Naive thymus-derived CD4-positive, alpha-beta T cell (primary cell): ENCODE measurements at regions of chr11 and their contacts with region 1.

Region 1: GRCh38 chr11:17354601-17354991 is 3.0 kb downstream of the NCR3LG1 start:
- DNase-seq: peak in 8 of 9 donors; percentile 27 to 55 (median 50)
- ATAC-seq: peak; percentile 43
- H3K4me3 ChIP-seq: no peak overlapping the region
- H3K4me3 Mint-ChIP-seq: peak overlapping the region in 9 of 10 donors; percentile 83 to 95 (median 90)
- H3K27ac ChIP-seq: no peak overlapping the region
- H3K27ac Mint-ChIP-seq: peak overlapping the region in 6 of 9 donors; percentile 29 to 84 (median 60)
- H3K4me1 ChIP-seq: peaks cover 10% of the 10 kb centered on the region in 2 donors
- H3K4me1 Mint-ChIP-seq: peaks cover 28 to 31% (median 29%) of the 10 kb centered on the region in 7 donors
- H3K27me3 ChIP-seq: no peaks in the 10 kb centered on the region
- H3K27me3 Mint-ChIP-seq: peaks cover 0 to 49% (median 0%) of the 10 kb centered on the region in 5 donors

Region 2: GRCh38 chr11:17207317-17208258 is 147.0 kb before region 1 on chr11 and contains the start of gene PIK3C2A:
- CTCF ChIA-PET with region 1: no interaction called
- POLR2A ChIA-PET with region 1: no interaction called
- intact Hi-C with region 1: loop called (anchors 2 kb)
- DNase-seq: peak; percentile 84 to 94 (median 91)
- ATAC-seq: peak; percentile 98
- H3K4me3 ChIP-seq: peak within 1 kb of the TSS; percentile 93
- H3K4me3 Mint-ChIP-seq: peak within 1 kb of the TSS; percentile 90 to 99 (median 98)
- H3K27ac ChIP-seq: peak within 1 kb of the TSS; percentile 93
- H3K27ac Mint-ChIP-seq: peak within 1 kb of the TSS; percentile 87 to 99 (median 97)
- H3K4me1 ChIP-seq: peaks cover 15 to 19% of the 10 kb centered on the region in 2 donors
- H3K4me1 Mint-ChIP-seq: peaks cover 34 to 57% (median 48%) of the 10 kb centered on the region in 7 donors
- H3K27me3 ChIP-seq: no peaks in the 10 kb centered on the region
- H3K27me3 Mint-ChIP-seq: no peaks in the 10 kb centered on the region
- total RNA-seq, gene PIK3C2A: 25.4 to 56.4 (median 42.0) TPM

Region 3: GRCh38 chr11:17221968-17222367 is 132.6 kb before region 1 on chr11:
- CTCF ChIA-PET with region 1: no interaction called
- POLR2A ChIA-PET with region 1: no interaction called
- intact Hi-C with region 1: no loop called
- DNase-seq: no peak
- ATAC-seq: peak; percentile 27
- H3K4me3 ChIP-seq: no peak overlapping the region
- H3K4me3 Mint-ChIP-seq: no peak overlapping the region
- H3K27ac ChIP-seq: no peak overlapping the region
- H3K27ac Mint-ChIP-seq: no peak overlapping the region
- H3K4me1 ChIP-seq: no peaks in the 10 kb centered on the region
- H3K4me1 Mint-ChIP-seq: no peaks in the 10 kb centered on the region
- H3K27me3 ChIP-seq: no peaks in the 10 kb centered on the region
- H3K27me3 Mint-ChIP-seq: peaks cover 0 to 23% (median 0%) of the 10 kb centered on the region in 5 donors

Region 4: DNA sequence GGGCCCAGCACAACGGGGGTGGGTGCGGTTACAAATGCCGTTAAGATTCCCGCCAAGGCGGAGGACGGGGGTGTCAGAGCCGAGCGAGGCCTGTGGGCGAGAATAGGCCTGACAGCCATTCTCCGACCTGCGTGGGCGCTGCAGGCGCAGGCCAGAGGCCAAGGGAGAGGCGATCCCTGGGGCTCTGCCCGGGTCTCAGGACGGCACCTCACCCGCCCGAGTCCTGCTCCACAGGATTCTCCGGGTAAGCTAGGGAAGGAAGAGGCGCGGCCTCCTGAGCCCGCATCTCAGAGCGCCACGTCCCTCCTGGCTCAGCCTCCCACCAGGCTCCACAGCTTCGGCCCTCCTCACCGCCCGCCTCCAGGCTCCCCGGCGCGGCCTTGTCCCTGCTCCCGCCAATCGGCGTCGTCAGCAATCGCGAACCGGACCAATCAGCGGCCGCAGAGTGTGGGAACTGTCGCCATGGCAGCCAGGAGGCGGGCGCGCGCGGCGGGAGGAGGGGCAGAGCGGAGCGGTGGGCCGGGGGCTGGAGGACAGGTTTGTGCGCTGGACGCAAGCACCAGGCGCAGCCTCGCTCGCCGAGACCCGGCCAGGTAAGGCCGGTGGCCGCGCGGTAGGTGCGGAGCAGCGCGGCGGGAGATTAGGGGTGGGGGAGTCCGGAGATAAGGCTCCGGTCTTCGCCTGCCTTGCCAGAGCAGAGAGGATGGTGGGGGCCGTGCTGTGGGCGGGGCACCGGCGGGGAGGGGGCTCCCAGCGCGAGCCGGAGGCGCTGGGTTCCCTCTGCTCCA is 78.2 kb before region 1 on chr11 and contains the start of gene NUCB2:
- CTCF ChIA-PET with region 1: interaction called, 4 read pairs
- POLR2A ChIA-PET with region 1: interaction called, 17 read pairs
- intact Hi-C with region 1: loop called (anchors 1 to 2 kb)
- DNase-seq: peak; percentile 92 to 98 (median 95)
- ATAC-seq: peak; percentile 96
- H3K4me3 ChIP-seq: peak within 1 kb of the TSS; percentile 78
- H3K4me3 Mint-ChIP-seq: peak within 1 kb of the TSS; percentile 83 to 99 (median 93)
- H3K27ac ChIP-seq: peak within 1 kb of the TSS; percentile 90
- H3K27ac Mint-ChIP-seq: peak within 1 kb of the TSS; percentile 88 to 93 (median 91)
- H3K4me1 ChIP-seq: peaks cover 17 to 28% of the 10 kb centered on the region in 2 donors
- H3K4me1 Mint-ChIP-seq: peaks cover 19 to 48% (median 38%) of the 10 kb centered on the region in 7 donors
- H3K27me3 ChIP-seq: no peaks in the 10 kb centered on the region
- H3K27me3 Mint-ChIP-seq: no peaks in the 10 kb centered on the region
- total RNA-seq, gene NUCB2: 72.0 to 171 (median 145) TPM

Region 5: GRCh38 chr11:17333799-17334586 is 20.6 kb before region 1 on chr11:
- CTCF ChIA-PET with region 1: interaction called, 3 read pairs
- POLR2A ChIA-PET with region 1: interaction called, 4 read pairs
- intact Hi-C with region 1: loop called in 1 of 2 experiments (anchors 2 kb)
- DNase-seq: peak in 6 of 9 donors; percentile 2 to 39 (median 29)
- ATAC-seq: peak; percentile 70
- H3K4me3 ChIP-seq: no peak overlapping the region
- H3K4me3 Mint-ChIP-seq: peak overlapping the region in 1 of 10 donors; percentile 2
- H3K27ac ChIP-seq: peak overlapping the region; percentile 26
- H3K27ac Mint-ChIP-seq: peak overlapping the region in 8 of 9 donors; percentile 14 to 83 (median 64)
- H3K4me1 ChIP-seq: peaks cover 14% of the 10 kb centered on the region in 2 donors
- H3K4me1 Mint-ChIP-seq: peaks cover 0 to 24% (median 19%) of the 10 kb centered on the region in 7 donors
- H3K27me3 ChIP-seq: no peaks in the 10 kb centered on the region
- H3K27me3 Mint-ChIP-seq: no peaks in the 10 kb centered on the region

Region 6: GRCh38 chr11:17389211-17389956 is 34.8 kb after region 1 on chr11:
- CTCF ChIA-PET with region 1: interaction called, 6 read pairs
- POLR2A ChIA-PET with region 1: no interaction called
- intact Hi-C with region 1: loop called (anchors 1 to 2 kb)
- DNase-seq: peak; percentile 57 to 87 (median 80)
- ATAC-seq: peak; percentile 96
- H3K4me3 ChIP-seq: peak overlapping the region; percentile 62
- H3K4me3 Mint-ChIP-seq: peak overlapping the region; percentile 77 to 90 (median 83)
- H3K27ac ChIP-seq: peak overlapping the region; percentile 66
- H3K27ac Mint-ChIP-seq: peak overlapping the region in 7 of 9 donors; percentile 12 to 84 (median 55)
- H3K4me1 ChIP-seq: peaks cover 0 to 4% of the 10 kb centered on the region in 2 donors
- H3K4me1 Mint-ChIP-seq: peaks cover 0 to 9% (median 5%) of the 10 kb centered on the region in 7 donors
- H3K27me3 ChIP-seq: no peaks in the 10 kb centered on the region
- H3K27me3 Mint-ChIP-seq: peaks cover 0 to 16% (median 0%) of the 10 kb centered on the region in 5 donors

Region 7: DNA sequence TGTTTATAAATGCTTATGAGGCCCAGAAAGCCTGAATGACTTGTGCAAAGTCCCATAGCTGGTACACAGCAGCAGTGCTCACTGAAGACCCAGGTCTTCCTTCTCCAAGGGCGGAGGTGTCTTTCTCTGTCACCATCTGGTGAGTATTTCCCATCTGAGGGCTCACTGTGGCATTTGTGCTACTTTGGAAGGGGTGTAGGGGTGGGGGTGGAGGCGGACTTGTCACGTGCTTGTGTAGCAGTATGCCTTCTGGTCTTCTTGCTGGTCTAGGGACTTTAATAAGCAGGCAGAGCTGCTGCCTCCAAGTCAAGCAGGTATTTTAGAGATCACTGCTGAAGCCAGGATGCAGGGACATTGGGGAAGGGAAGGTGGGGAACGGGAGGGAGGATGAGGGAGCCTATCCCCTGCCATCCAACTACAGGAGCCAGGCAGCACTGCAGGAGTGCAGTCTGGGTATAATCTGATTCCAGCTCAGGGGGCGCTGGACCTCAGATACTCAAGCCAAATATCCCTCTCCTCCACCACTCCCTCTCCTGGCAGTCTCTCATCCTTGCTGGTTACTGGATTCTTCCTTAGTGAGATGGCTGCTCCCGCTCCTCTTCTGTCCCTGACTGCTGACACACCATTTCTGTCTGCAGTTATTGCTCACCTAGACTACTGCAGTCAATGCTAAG is 118.6 kb after region 1 on chr11:
- CTCF ChIA-PET with region 1: no interaction called
- POLR2A ChIA-PET with region 1: no interaction called
- intact Hi-C with region 1: no loop called
- DNase-seq: no peak
- ATAC-seq: no peak
- H3K4me3 ChIP-seq: no peak overlapping the region
- H3K4me3 Mint-ChIP-seq: no peak overlapping the region
- H3K27ac ChIP-seq: no peak overlapping the region
- H3K27ac Mint-ChIP-seq: no peak overlapping the region
- H3K4me1 ChIP-seq: no peaks in the 10 kb centered on the region
- H3K4me1 Mint-ChIP-seq: peaks cover 0 to 9% (median 2%) of the 10 kb centered on the region in 7 donors
- H3K27me3 ChIP-seq: no peaks in the 10 kb centered on the region
- H3K27me3 Mint-ChIP-seq: peaks cover 40 to 68% (median 48%) of the 10 kb centered on the region in 5 donors

Region 8: GRCh38 chr11:17504330-17505107 is 149.9 kb after region 1 on chr11:
- CTCF ChIA-PET with region 1: no interaction called
- POLR2A ChIA-PET with region 1: no interaction called
- intact Hi-C with region 1: loop called in 1 of 2 experiments (anchors 1 kb)
- DNase-seq: peak; percentile 63 to 83 (median 77)
- ATAC-seq: peak; percentile 79
- H3K4me3 ChIP-seq: no peak overlapping the region
- H3K4me3 Mint-ChIP-seq: no peak overlapping the region
- H3K27ac ChIP-seq: no peak overlapping the region
- H3K27ac Mint-ChIP-seq: no peak overlapping the region
- H3K4me1 ChIP-seq: no peaks in the 10 kb centered on the region
- H3K4me1 Mint-ChIP-seq: no peaks in the 10 kb centered on the region
- H3K27me3 ChIP-seq: no peaks in the 10 kb centered on the region
- H3K27me3 Mint-ChIP-seq: peaks cover 0 to 12% (median 5%) of the 10 kb centered on the region in 5 donors

Region 9: DNA sequence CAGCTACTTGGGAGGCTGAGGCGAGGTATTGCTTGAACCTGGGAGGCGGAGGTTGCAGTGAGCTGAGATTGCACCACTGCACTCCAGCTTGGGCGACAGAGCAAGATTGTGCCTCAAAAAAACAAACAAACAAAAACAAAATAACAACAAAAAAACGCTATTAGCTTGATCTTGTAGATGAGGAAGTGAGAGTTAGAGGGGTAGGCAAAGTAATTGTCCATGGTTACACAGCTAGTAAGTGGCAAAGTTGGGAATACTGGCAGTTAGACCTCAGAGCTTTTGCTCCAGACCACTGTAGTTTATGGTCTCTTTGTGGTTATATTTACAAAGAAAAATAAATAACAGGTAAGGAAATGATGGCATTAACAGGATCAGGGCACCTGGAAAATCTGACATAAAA is 1072.6 kb after region 1 on chr11:
- CTCF ChIA-PET with region 1: no interaction called
- POLR2A ChIA-PET with region 1: no interaction called
- intact Hi-C with region 1: no loop called
- DNase-seq: no peak
- ATAC-seq: no peak
- H3K4me3 ChIP-seq: no peak overlapping the region
- H3K4me3 Mint-ChIP-seq: no peak overlapping the region
- H3K27ac ChIP-seq: no peak overlapping the region
- H3K27ac Mint-ChIP-seq: no peak overlapping the region
- H3K4me1 ChIP-seq: no peaks in the 10 kb centered on the region
- H3K4me1 Mint-ChIP-seq: peaks cover 3 to 7% (median 5%) of the 10 kb centered on the region in 7 donors
- H3K27me3 ChIP-seq: no peaks in the 10 kb centered on the region
- H3K27me3 Mint-ChIP-seq: peaks cover 0 to 2% (median 0%) of the 10 kb centered on the region in 5 donors